CD8-positive, alpha-beta T cell (primary cell): ENCODE measurements at regions of chrX and their contacts with region 1.

Region 1: GRCh38 chrX:56802921-56803849 is 74.1 kb downstream of the NBDY start:
- DNase-seq: peak in 8 of 9 experiments; percentile 21 to 87 (median 60)
- ATAC-seq: no peak
- H3K4me3 ChIP-seq: no peak overlapping the region
- H3K4me3 Mint-ChIP-seq: no peak overlapping the region
- H3K27ac ChIP-seq: no peak overlapping the region
- H3K27ac Mint-ChIP-seq: peak overlapping the region; percentile 71
- H3K4me1 ChIP-seq: peaks cover 32% of the 10 kb centered on the region
- H3K4me1 Mint-ChIP-seq: peaks cover 32% of the 10 kb centered on the region
- H3K27me3 ChIP-seq: no peaks in the 10 kb centered on the region
- H3K27me3 Mint-ChIP-seq: no peaks in the 10 kb centered on the region
- CTCF ChIP-seq: peak; percentile 36

Region 2: GRCh38 chrX:56281789-56282188 is 521.4 kb before region 1 on chrX:
- CTCF ChIA-PET with region 1: no interaction called
- POLR2A ChIA-PET with region 1: no interaction called
- intact Hi-C with region 1: loop called (anchors 2 to 5 kb)
- DNase-seq: peak in 4 of 9 experiments; percentile 6 to 68 (median 30)
- ATAC-seq: no peak
- H3K4me3 ChIP-seq: no peak overlapping the region
- H3K4me3 Mint-ChIP-seq: no peak overlapping the region
- H3K27ac ChIP-seq: no peak overlapping the region
- H3K27ac Mint-ChIP-seq: no peak overlapping the region
- H3K4me1 ChIP-seq: peaks cover 6% of the 10 kb centered on the region
- H3K4me1 Mint-ChIP-seq: peaks cover 8% of the 10 kb centered on the region
- H3K27me3 ChIP-seq: no peaks in the 10 kb centered on the region
- H3K27me3 Mint-ChIP-seq: no peaks in the 10 kb centered on the region
- CTCF ChIP-seq: peak; percentile 43

Region 3: DNA sequence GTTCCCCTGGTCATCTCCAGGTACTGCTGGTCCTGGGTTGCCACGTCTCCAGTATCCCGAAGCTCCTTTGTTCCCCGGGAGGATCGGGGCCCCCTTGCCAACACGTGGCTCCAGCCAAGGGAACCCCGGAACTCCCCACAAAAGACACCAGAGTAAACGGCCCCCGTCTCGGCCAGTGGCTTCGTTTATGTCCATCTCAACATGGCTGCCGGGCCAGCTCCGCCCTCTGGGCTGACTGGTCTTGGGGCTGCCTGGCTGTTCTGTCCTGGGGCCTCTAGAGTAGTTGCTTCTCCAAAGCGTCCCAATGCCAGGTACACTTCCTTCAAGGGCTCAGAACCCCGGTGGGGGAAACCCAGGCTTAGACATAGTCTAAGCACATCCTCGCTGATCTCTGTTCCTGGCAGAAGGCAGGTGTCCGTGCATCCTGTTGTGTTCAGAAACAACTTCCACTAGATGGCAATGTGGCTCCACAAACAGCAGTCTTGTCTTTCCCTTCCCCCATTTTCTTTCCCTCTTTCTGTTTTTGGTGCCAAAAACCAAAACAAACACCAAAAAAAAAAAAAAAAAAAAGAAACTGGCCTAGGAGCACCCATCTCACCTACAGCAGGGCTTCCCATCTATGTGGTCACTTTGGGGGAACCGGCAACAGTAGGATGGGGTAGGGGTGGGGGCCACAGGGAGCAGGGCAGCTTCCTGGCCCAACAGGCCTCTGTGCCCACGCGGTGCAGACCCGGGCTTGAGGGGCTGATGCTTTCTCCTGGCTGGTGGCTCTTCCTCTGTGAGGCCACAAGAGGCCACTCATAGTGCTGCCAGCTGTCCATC is 38.8 kb before region 1 on chrX:
- CTCF ChIA-PET with region 1: interaction called, 3 read pairs
- POLR2A ChIA-PET with region 1: no interaction called
- intact Hi-C with region 1: loop called in 1 of 2 experiments (anchors 5 kb)
- DNase-seq: peak; percentile 37 to 90 (median 62)
- ATAC-seq: peak; percentile 69
- H3K4me3 ChIP-seq: peak overlapping the region in 1 of 2 experiments; percentile 35
- H3K4me3 Mint-ChIP-seq: peak overlapping the region; percentile 70
- H3K27ac ChIP-seq: peak overlapping the region; percentile 37 to 69
- H3K27ac Mint-ChIP-seq: peak overlapping the region; percentile 91
- H3K4me1 ChIP-seq: peaks cover 40% of the 10 kb centered on the region
- H3K4me1 Mint-ChIP-seq: peaks cover 42% of the 10 kb centered on the region
- H3K27me3 ChIP-seq: no peaks in the 10 kb centered on the region
- H3K27me3 Mint-ChIP-seq: no peaks in the 10 kb centered on the region
- CTCF ChIP-seq: peak; percentile 47

Region 4: GRCh38 chrX:56785442-56785841 is 17.7 kb before region 1 on chrX:
- CTCF ChIA-PET with region 1: no interaction called
- POLR2A ChIA-PET with region 1: no interaction called
- intact Hi-C with region 1: no loop called
- DNase-seq: peak in 1 of 9 experiments; percentile 36
- ATAC-seq: no peak
- H3K4me3 ChIP-seq: no peak overlapping the region
- H3K4me3 Mint-ChIP-seq: no peak overlapping the region
- H3K27ac ChIP-seq: no peak overlapping the region
- H3K27ac Mint-ChIP-seq: no peak overlapping the region
- H3K4me1 ChIP-seq: peaks cover 10% of the 10 kb centered on the region
- H3K4me1 Mint-ChIP-seq: peaks cover 20% of the 10 kb centered on the region
- H3K27me3 ChIP-seq: no peaks in the 10 kb centered on the region
- H3K27me3 Mint-ChIP-seq: no peaks in the 10 kb centered on the region
- CTCF ChIP-seq: no peak

Region 5: DNA sequence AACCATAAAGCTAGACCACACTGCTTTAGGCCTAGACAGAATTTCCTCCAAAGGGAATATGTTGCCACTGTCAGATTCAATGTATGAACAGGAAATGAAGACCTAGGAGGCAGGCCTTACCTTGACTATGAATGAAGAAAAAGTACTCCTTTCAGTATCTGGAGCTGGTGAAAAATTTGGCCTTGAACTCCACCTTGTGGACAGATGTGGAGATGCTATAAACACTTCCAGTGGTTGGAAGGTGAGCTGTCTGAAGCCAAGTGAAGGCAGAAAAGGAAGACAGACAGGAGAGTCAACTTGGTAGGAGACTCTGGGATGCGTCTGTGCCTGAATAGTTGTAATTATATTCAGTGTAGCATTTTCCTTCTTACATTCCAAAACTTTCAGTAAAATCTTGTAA is 175.0 kb after region 1 on chrX:
- CTCF ChIA-PET with region 1: interaction called, 12 read pairs
- POLR2A ChIA-PET with region 1: no interaction called
- intact Hi-C with region 1: loop called (anchors 1 kb)
- DNase-seq: peak in 8 of 9 experiments; percentile 5 to 69 (median 35)
- ATAC-seq: peak; percentile 88
- H3K4me3 ChIP-seq: no peak overlapping the region
- H3K4me3 Mint-ChIP-seq: no peak overlapping the region
- H3K27ac ChIP-seq: no peak overlapping the region
- H3K27ac Mint-ChIP-seq: no peak overlapping the region
- H3K4me1 ChIP-seq: no peaks in the 10 kb centered on the region
- H3K4me1 Mint-ChIP-seq: peaks cover 3% of the 10 kb centered on the region
- H3K27me3 ChIP-seq: no peaks in the 10 kb centered on the region
- H3K27me3 Mint-ChIP-seq: no peaks in the 10 kb centered on the region
- CTCF ChIP-seq: peak; percentile 66

Region 6: GRCh38 chrX:57453901-57454300 is 650.7 kb after region 1 on chrX:
- CTCF ChIA-PET with region 1: no interaction called
- POLR2A ChIA-PET with region 1: no interaction called
- intact Hi-C with region 1: loop called in 1 of 2 experiments (anchors 10 kb)
- DNase-seq: peak in 3 of 9 experiments; percentile 0 to 41 (median 29)
- ATAC-seq: no peak
- H3K4me3 ChIP-seq: no peak overlapping the region
- H3K4me3 Mint-ChIP-seq: no peak overlapping the region
- H3K27ac ChIP-seq: no peak overlapping the region
- H3K27ac Mint-ChIP-seq: no peak overlapping the region
- H3K4me1 ChIP-seq: no peaks in the 10 kb centered on the region
- H3K4me1 Mint-ChIP-seq: no peaks in the 10 kb centered on the region
- H3K27me3 ChIP-seq: no peaks in the 10 kb centered on the region
- H3K27me3 Mint-ChIP-seq: no peaks in the 10 kb centered on the region
- CTCF ChIP-seq: no peak

Region 7: DNA sequence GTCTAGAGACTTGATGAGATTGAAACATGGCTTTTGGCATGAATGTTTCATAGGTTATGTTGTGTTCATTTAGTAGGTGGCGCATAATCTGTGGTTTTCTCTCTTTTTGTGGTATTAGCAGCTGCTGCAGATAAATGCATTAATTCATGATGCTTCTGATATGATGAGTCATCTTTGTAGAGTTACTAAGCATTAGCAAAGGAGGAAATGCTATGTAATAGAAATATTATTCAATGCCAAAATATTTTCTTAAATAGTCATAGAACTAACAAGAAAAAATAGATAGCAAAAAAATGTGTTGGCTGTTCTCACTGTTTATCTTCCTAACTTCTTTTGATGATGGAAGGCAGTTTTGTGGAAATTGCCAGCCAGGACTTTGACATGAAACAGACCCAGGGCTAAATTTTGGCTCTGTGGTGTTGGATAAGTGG is 792.2 kb after region 1 on chrX:
- CTCF ChIA-PET with region 1: no interaction called
- POLR2A ChIA-PET with region 1: no interaction called
- intact Hi-C with region 1: loop called in 1 of 2 experiments (anchors 10 kb)
- DNase-seq: peak in 2 of 9 experiments; percentile 27 to 47
- ATAC-seq: no peak
- H3K4me3 ChIP-seq: no peak overlapping the region
- H3K4me3 Mint-ChIP-seq: peak overlapping the region; percentile 73
- H3K27ac ChIP-seq: no peak overlapping the region
- H3K27ac Mint-ChIP-seq: peak overlapping the region; percentile 49
- H3K4me1 ChIP-seq: peaks cover 20% of the 10 kb centered on the region
- H3K4me1 Mint-ChIP-seq: peaks cover 42% of the 10 kb centered on the region
- H3K27me3 ChIP-seq: no peaks in the 10 kb centered on the region
- H3K27me3 Mint-ChIP-seq: no peaks in the 10 kb centered on the region
- CTCF ChIP-seq: no peak